Activated naive CD4-positive, alpha-beta T cell treated with anti-CD3 and anti-CD28 coated beads for 36 hours (primary cell): ENCODE measurements at regions of chr2 and their contacts with region 1.

Region 1: GRCh38 chr2:156435715-156436496 is at the start of gene GPD2:
- DNase-seq: peak; percentile 56
- H3K4me3 Mint-ChIP-seq: peak within 1 kb of the TSS; percentile 94
- H3K27ac Mint-ChIP-seq: peak within 1 kb of the TSS; percentile 92
- H3K4me1 Mint-ChIP-seq: peaks cover 30% of the 10 kb centered on the region
- H3K27me3 Mint-ChIP-seq: no peaks in the 10 kb centered on the region
- total RNA-seq, gene GPD2: 18.8 to 19.9 TPM

Region 2: GRCh38 chr2:156099382-156099781 is 336.5 kb before region 1 on chr2:
- CTCF ChIA-PET with region 1: no interaction called
- intact Hi-C with region 1: no loop called
- DNase-seq: no peak
- H3K4me3 Mint-ChIP-seq: no peak overlapping the region
- H3K27ac Mint-ChIP-seq: no peak overlapping the region
- H3K4me1 Mint-ChIP-seq: no peaks in the 10 kb centered on the region
- H3K27me3 Mint-ChIP-seq: peaks cover 4% of the 10 kb centered on the region

Region 3: DNA sequence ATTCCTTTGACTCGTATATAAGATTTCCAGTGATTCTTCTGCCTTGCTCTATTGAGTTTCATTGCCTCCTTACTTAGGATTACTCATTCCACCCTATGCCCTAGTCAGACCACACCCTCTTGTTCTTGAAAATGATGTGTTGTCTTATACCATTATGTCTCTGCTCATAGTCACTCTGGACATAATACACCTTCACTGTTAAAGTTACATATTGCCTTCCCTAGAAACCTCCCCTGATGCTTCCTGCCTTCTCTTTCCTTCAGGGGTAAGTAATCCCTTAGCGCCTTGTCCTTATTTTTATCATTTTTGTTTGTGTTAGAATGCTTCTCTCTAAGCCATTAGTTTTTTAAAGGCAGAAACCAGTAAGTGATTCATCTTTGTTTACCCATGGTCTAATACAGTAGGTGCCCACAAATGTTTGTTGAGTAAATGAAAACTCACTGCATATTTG is 19.6 kb after region 1 on chr2:
- CTCF ChIA-PET with region 1: no interaction called
- intact Hi-C with region 1: loop called (anchors 1 kb)
- DNase-seq: no peak
- H3K4me3 Mint-ChIP-seq: no peak overlapping the region
- H3K27ac Mint-ChIP-seq: no peak overlapping the region
- H3K4me1 Mint-ChIP-seq: peaks cover 18% of the 10 kb centered on the region
- H3K27me3 Mint-ChIP-seq: no peaks in the 10 kb centered on the region

Region 4: GRCh38 chr2:156490466-156490840 is 54.5 kb after region 1 on chr2:
- CTCF ChIA-PET with region 1: no interaction called
- intact Hi-C with region 1: loop called (anchors 2 kb)
- DNase-seq: no peak
- H3K4me3 Mint-ChIP-seq: no peak overlapping the region
- H3K27ac Mint-ChIP-seq: no peak overlapping the region
- H3K4me1 Mint-ChIP-seq: peaks cover 40% of the 10 kb centered on the region
- H3K27me3 Mint-ChIP-seq: no peaks in the 10 kb centered on the region